WTC11 (cell line): ENCODE measurements at regions of chr1 and their contacts with region 1.

Region 1: DNA sequence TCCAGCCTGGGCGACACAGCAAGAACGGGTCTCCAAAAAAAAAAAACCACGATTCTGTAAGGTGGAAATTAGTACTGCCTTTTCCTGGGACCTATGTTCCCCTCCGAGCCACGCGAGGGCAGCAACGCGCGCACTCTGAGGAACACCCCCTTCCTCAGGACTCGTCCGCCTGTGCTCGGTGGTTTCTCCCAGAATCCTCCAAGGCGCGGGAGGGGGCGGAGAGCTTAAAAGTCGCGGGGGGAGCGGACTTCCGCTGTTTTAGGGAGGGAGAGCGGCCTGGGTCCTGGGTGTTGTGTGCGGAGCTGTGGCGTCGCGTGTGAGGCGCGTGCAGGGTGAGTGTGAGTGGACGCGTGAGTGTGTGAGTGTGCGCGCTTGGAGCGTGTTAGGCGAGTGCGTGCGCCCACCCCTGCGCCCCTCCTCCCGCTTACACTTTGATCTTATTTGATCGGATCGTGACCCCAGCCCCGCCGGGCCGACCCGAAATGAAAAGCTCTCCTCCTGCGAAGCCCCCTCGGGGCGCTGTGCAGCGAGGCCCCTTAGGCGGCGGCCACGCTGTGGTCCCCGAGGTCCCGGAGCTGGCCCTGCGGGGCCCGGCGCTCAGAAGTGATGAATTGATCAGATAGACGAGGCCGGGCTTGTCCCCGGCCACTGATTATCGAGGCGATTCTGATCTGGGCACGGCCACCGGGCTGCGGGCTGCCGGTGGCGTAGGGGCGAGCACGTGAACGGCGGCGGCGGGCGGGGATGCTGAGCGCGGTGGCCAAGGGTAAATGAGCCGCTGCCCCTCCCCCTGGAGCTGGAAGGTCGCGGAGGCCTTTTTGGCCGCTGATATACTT is 9.6 kb downstream of the TMEM167B start:
- DNase-seq: peak; percentile 96
- ATAC-seq: peak; percentile 95
- H3K4me3 Mint-ChIP-seq: peak overlapping the region; percentile 98
- H3K27ac Mint-ChIP-seq: peak overlapping the region; percentile 98
- H3K4me1 Mint-ChIP-seq: 0 out of 2 replicates have a peak, but pooled peaks cover 3% of the 10 kb centered on the region
- H3K27me3 Mint-ChIP-seq: peaks cover under 1% of the 10 kb centered on the region
- CTCF ChIP-seq: no peak

Region 2: DNA sequence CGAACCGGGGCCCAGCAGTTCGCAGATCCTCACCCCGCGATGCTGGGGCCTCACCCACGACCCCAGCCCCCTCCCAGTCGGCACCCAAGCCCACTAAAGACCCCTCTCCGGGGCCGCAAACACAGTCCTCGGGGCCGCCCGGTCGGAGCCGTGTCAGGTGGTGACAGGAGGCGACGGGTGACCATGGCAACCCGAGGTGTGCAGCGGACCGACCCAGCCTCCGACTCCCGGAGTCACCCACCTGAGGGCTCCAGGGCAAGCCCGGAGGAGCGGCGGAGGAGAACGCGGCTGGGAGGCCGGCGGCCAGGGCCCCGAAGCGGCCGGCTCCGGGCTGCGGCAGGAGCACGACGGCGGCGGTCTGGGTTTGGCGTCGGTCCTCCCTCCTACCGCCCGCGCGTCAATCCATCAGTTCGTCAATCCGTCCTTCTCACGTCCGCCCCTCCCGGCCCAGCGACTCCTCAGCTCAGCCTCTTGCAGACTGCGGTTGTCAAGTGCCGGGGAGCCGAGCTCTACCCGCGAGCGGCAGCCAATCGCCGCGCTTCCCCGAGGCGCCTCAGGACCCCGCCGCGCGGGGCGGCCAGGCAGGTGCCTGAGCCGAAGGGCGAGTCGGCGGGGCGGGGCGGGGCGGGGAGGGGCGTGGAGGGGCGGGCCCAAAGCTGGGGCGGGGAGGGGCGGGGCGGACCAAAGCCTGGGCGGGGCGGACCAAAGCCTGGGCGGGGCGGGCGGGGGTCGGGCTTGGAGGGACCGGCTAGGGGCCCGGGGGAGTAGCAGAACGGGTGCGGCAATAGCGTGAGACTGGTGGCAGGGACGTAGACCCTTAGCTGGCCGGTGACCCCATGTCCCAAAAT is 58.3 kb before region 1 on chr1 and contains the start of gene WDR47:
- CTCF ChIA-PET with region 1: interaction called, 11 read pairs
- POLR2A ChIA-PET with region 1: interaction called, 6 read pairs
- DNase-seq: peak; percentile 94
- ATAC-seq: peak; percentile 96
- H3K4me3 Mint-ChIP-seq: peak within 1 kb of the TSS; percentile 86
- H3K27ac Mint-ChIP-seq: no peak within 1 kb of the TSS; the same call in 1 of the 2 replicates
- H3K4me1 Mint-ChIP-seq: peaks cover 12% of the 10 kb centered on the region
- H3K27me3 Mint-ChIP-seq: no peaks in the 10 kb centered on the region; the same call in 1 of the 2 replicates
- CTCF ChIP-seq: no peak
- total RNA-seq, gene WDR47: 6.9 to 8.0 TPM (median 7.0 TPM) in 3 replicates

Region 3: GRCh38 chr1:109075531-109076490 is 24.3 kb before region 1 on chr1 and contains the start of gene TAF13:
- CTCF ChIA-PET with region 1: interaction called, 6 read pairs
- POLR2A ChIA-PET with region 1: interaction called, 17 read pairs
- DNase-seq: peak; percentile 92
- ATAC-seq: peak; percentile 99
- H3K4me3 Mint-ChIP-seq: peak within 1 kb of the TSS; percentile 99
- H3K27ac Mint-ChIP-seq: peak within 1 kb of the TSS; percentile 98
- H3K4me1 Mint-ChIP-seq: peaks cover 27% of the 10 kb centered on the region
- H3K27me3 Mint-ChIP-seq: no peaks in the 10 kb centered on the region
- CTCF ChIP-seq: no peak
- total RNA-seq, gene TAF13: 35.2 to 43.0 TPM (median 37.3 TPM) in 3 replicates